ENCODE measurements at regions of chr5 and their contacts with region 1.

Region 1: GRCh38 chr5:151523335-151523734 is 67.8 kb downstream of the FAT2 start:
- DNase-seq: no peak
- ATAC-seq: peak; percentile 81 to 89 (median 88)
- H3K4me3 ChIP-seq: no peak overlapping the region
- H3K27ac ChIP-seq: no peak overlapping the region
- H3K4me1 ChIP-seq: no peaks in the 10 kb centered on the region
- H3K27me3 ChIP-seq: no peaks in the 10 kb centered on the region
- CTCF ChIP-seq: peak; percentile 68

Region 2: DNA sequence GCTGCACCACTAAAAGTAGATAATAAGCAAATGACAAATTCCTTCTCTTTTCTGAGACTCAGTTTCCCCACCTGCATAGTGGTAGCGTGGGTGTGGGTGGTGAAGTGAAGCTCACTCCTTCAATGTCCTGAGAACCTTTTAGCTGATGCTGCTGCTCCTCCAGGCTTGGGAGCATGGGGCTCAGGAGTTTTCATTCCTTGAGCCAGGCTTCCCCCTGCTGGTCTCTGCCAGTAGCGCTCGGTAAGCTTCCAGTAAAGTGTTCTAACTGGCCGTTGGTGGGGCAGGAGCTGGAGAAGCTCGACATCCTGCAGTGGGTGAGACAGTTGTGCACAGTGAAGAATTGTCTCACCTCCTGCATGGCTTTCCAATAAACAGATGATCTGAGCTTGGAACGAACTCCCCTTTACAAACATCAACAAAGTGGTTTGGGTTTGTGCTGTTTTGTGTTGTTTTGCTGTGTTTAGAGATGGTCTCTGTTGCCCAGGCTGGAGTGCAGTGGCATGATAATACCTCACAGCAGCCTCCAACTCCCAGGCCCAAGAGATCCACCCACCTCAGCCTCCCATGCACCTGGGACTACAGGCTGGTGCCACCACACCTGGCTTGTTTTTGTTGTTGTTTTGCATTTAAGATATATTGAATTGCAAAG is 128.8 kb after region 1 on chr5:
- intact Hi-C with region 1: loop called in 1 of 2 experiments (anchors 5 kb)
- DNase-seq: peak; percentile 79 to 85
- ATAC-seq: peak; percentile 93 to 98 (median 96)
- H3K4me3 ChIP-seq: no peak overlapping the region
- H3K27ac ChIP-seq: no peak overlapping the region
- H3K4me1 ChIP-seq: no peaks in the 10 kb centered on the region
- H3K27me3 ChIP-seq: no peaks in the 10 kb centered on the region
- CTCF ChIP-seq: peak; percentile 86

Region 3: GRCh38 chr5:151740336-151740942 is 217.1 kb after region 1 on chr5:
- intact Hi-C with region 1: loop called in 1 of 2 experiments (anchors 5 kb)
- DNase-seq: peak; percentile 73 to 75
- ATAC-seq: peak; percentile 70 to 81 (median 78)
- H3K4me3 ChIP-seq: peak overlapping the region; percentile 5
- H3K27ac ChIP-seq: peak overlapping the region; percentile 62
- H3K4me1 ChIP-seq: peaks cover 18% of the 10 kb centered on the region
- H3K27me3 ChIP-seq: no peaks in the 10 kb centered on the region
- CTCF ChIP-seq: peak; percentile 88

Measured in psoas muscle (tissue), 8 donors.